ENCODE measurements at regions of chr2 and their contacts with region 1.

Region 1: DNA sequence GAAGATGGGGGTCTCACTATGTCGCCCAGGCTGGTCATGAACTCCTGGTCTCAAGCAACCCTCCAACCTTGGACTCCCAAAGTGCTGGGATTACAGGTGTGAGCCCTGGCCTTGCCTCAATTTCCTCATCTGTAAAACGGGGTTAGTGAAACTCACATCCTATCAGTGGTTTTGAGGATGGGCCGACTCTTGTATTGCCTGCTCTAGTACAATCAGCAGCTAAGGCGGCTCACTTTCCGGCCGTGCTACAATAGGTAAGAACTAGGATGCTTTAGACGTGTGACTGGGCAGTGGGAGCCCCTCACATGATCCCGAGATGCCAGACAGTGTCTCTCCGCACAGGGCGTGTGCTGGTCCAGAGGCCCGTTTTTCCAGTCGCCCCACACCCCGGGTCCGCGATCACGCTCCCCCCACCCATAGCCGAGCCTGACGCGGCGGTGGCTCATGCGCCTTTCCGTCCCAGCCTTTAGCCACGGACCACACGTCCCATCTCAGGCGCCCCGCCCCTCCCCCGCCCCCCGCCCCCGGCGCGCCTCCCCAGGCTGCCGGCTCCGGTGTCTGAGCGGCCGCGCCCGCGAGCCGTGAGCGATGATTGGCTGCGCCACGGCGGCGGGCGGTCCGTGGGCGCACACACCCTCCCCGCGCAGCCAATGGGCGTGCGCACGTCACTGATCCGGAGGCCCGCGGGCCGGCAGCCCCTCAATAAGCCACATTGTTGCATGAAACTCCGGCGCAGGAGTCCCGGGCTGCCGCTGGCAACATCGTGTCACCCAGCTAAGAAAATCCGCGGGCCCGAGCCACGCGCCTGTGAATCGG is at the start of gene HK2:
- DNase-seq: peak; percentile 83 to 93 (median 89)
- ATAC-seq: peak; percentile 90 to 97 (median 96)
- H3K4me3 ChIP-seq: peak within 1 kb of the TSS; percentile 38 to 83 (median 60)
- H3K27ac ChIP-seq: peak within 1 kb of the TSS in 10 of 12 donors; percentile 11 to 89 (median 54)
- H3K4me1 ChIP-seq: peaks cover 0 to 47% (median 12%) of the 10 kb centered on the region in 12 donors
- H3K27me3 ChIP-seq: peaks cover 0 to 19% (median 0%) of the 10 kb centered on the region in 9 donors
- CTCF ChIP-seq: no peak
- POLR2A ChIP-seq: peak; percentile 35 to 41
- total RNA-seq, gene HK2: 1.9 to 24.6 (median 16.3) TPM

Region 2: GRCh38 chr2:74715078-74715791 is 118.4 kb before region 1 on chr2:
- intact Hi-C with region 1: loop called in 2 of 10 experiments (anchors 5 kb)
- DNase-seq: peak; percentile 77 to 88 (median 81)
- ATAC-seq: peak; percentile 82 to 98 (median 94)
- H3K4me3 ChIP-seq: peak overlapping the region; percentile 27 to 65 (median 60)
- H3K27ac ChIP-seq: peak overlapping the region in 3 of 12 donors; percentile 46 to 76 (median 53)
- H3K4me1 ChIP-seq: peaks cover 0 to 11% (median 3%) of the 10 kb centered on the region in 12 donors
- H3K27me3 ChIP-seq: peaks cover 0 to 37% (median 4%) of the 10 kb centered on the region in 9 donors
- CTCF ChIP-seq: peak; percentile 79 to 94 (median 90)
- POLR2A ChIP-seq: no peak

Region 3: GRCh38 chr2:74764429-74765272 is 69.0 kb before region 1 on chr2:
- intact Hi-C with region 1: loop called in 1 of 10 experiments (anchors 5 kb)
- DNase-seq: no peak
- ATAC-seq: no peak
- H3K4me3 ChIP-seq: no peak overlapping the region
- H3K27ac ChIP-seq: no peak overlapping the region
- H3K4me1 ChIP-seq: peaks cover 0 to 22% (median 6%) of the 10 kb centered on the region in 12 donors
- H3K27me3 ChIP-seq: no peaks in the 10 kb centered on the region
- CTCF ChIP-seq: no peak
- POLR2A ChIP-seq: no peak